Posterior vena cava (tissue), 2 donors: ENCODE measurements at regions of chr3 and their contacts with region 1.

Region 1: GRCh38 chr3:52682016-52682415 is 3.7 kb downstream of the PBRM1 start:
- DNase-seq: no peak

Region 2: GRCh38 chr3:52231502-52232293 is 450.3 kb before region 1 on chr3:
- intact Hi-C with region 1: loop called in 1 of 2 experiments (anchors 5 kb)
- DNase-seq: peak; percentile 93

Region 3: GRCh38 chr3:52721002-52721729 is 39.1 kb after region 1 on chr3:
- intact Hi-C with region 1: no loop called
- DNase-seq: no peak

Region 4: GRCh38 chr3:52934630-52935530 is 252.9 kb after region 1 on chr3:
- intact Hi-C with region 1: no loop called
- DNase-seq: no peak